Right ventricle myocardium inferior (tissue), 1 donor: ENCODE measurements at regions of chr6 and their contacts with region 1.

Region 1: GRCh38 chr6:2999618-3000557 is at the start of gene NQO2:
- DNase-seq: peak; percentile 97
- ATAC-seq: peak; percentile 96
- total RNA-seq, gene NQO2: 57.5 TPM

Region 2: GRCh38 chr6:3023663-3024483 is 24.0 kb after region 1 on chr6:
- intact Hi-C with region 1: loop called (anchors 1 kb)
- DNase-seq: peak; percentile 98
- ATAC-seq: peak; percentile 97

Region 3: DNA sequence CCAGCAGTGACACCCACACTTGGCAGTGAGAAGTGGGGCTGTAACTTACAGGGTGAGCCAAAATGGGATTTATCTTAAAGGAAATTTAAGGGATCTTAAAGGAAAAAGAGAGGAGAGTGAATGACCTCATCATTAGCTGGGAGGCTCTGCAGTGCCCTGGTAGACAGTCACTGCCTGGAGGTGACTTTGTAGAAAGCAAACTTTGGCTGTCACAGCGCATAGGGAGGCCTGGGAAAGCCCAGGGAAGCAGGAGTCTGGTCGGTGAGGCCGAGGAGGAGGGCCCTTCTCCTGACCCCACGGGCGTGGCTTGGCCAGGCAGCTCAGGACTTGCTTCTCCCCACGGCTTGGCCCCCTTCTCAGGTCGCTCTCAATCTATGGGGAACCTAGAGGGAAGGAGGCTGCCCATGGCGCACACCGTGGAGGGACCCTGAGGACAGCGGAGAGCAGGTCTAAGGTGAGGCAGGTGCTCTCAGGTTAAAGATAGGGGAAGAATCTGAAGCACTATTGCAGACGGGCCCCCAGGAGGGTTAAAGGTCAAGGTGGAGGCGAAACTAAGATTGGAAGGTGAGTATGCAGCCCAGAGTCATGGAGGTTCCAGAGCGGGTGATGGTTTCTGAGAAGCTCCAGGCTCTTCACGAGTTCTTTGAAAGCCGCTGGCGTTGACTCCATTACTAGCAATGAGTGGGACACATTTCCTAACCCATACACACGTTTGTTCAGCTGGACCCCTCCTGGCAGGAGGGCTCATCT is 52.8 kb after region 1 on chr6:
- intact Hi-C with region 1: loop called (anchors 1 kb)
- DNase-seq: no peak
- ATAC-seq: no peak

Region 4: GRCh38 chr6:3118353-3119039 is 118.6 kb after region 1 on chr6 and contains the start of gene BPHL:
- intact Hi-C with region 1: loop called (anchors 2 kb)
- DNase-seq: peak; percentile 99
- ATAC-seq: peak; percentile 99
- total RNA-seq, gene BPHL: 19.0 TPM